ENCODE measurements at regions of chr2 and their contacts with region 1.

Region 1: GRCh38 chr2:38146275-38146906 is 70.4 kb upstream of the CYP1B1 start:
- DNase-seq: peak; percentile 49
- H3K4me3 Mint-ChIP-seq: peak overlapping the region; percentile 19
- H3K27ac Mint-ChIP-seq: peak overlapping the region; percentile 80
- H3K4me1 Mint-ChIP-seq: peaks cover 27% of the 10 kb centered on the region
- H3K27me3 Mint-ChIP-seq: no peaks in the 10 kb centered on the region
- CTCF ChIP-seq: no peak

Region 2: GRCh38 chr2:38122344-38122743 is 24.0 kb before region 1 on chr2:
- CTCF ChIA-PET with region 1: interaction called, 3 read pairs
- intact Hi-C with region 1: loop called (anchors 2 kb)
- DNase-seq: no peak
- H3K4me3 Mint-ChIP-seq: no peak overlapping the region
- H3K27ac Mint-ChIP-seq: no peak overlapping the region
- H3K4me1 Mint-ChIP-seq: peaks cover 31% of the 10 kb centered on the region
- H3K27me3 Mint-ChIP-seq: no peaks in the 10 kb centered on the region
- CTCF ChIP-seq: no peak

Region 3: DNA sequence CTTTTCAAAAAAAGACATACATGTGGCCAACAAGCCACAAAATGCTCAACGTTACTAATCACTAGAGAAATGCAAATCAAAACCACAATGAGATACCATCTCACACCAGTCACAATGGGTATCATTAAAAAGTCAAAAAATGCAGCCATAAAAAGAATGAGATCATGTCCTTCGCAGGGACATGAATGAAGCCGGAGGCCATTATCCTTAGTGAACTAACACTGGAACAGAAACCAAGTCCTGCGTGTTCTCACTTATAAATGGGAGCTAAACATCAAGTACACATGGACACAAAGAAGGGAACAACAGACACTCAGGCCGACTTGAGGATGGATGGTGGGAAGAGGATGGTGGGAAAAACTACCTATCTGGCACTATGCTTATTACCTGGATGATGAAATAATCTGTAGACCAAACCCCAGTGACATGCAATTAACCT is 248.5 kb after region 1 on chr2:
- CTCF ChIA-PET with region 1: no interaction called
- intact Hi-C with region 1: no loop called
- DNase-seq: no peak
- H3K4me3 Mint-ChIP-seq: no peak overlapping the region
- H3K27ac Mint-ChIP-seq: peak overlapping the region; percentile 89
- H3K4me1 Mint-ChIP-seq: peaks cover 29% of the 10 kb centered on the region
- H3K27me3 Mint-ChIP-seq: no peaks in the 10 kb centered on the region
- CTCF ChIP-seq: no peak

Measured in Calu3 (cell line).